HAP-1 (cell line): ENCODE measurements at regions of chr17 and their contacts with region 1.

Region 1: DNA sequence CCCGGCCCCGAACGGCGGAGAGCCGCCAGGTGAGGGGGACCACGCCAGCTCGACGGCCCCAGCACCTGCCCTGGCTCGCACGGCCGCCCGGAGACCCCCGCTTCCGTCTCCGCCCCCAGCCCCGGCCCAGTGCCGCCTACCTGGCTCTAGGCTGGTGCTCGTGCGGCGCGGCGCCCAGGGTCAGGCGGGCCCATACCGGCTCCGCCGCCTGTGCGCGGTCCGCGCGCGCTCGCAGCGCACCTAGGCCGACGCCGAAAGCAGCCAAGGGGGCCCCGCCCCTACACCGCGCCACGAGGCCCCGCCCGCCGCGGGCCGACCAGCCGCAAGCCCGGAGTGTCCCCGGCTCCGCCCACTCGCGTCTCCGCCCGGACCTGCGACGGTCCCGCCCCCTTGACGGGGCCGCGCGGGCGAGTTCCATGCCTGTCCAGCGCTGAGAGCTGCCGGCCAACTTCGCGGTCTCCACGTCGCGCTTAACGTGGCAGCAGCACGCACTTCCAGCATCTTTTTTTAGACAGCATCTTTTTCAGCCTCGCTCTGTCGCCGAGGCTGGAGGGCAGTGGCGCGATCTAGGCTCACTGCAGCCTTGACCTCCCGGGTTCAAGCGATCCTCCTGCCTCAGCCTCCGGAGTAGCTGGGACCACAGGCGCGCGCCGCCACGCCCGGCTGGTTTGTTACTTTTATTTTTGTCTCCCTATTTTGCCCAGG is at the start of gene SLC25A39:
- DNase-seq: peak; percentile 84 to 96
- H3K4me3 ChIP-seq: peak within 1 kb of the TSS; percentile 88
- H3K4me1 ChIP-seq: peaks cover 13% of the 10 kb centered on the region
- H3K27me3 ChIP-seq: no peaks in the 10 kb centered on the region

Region 2: DNA sequence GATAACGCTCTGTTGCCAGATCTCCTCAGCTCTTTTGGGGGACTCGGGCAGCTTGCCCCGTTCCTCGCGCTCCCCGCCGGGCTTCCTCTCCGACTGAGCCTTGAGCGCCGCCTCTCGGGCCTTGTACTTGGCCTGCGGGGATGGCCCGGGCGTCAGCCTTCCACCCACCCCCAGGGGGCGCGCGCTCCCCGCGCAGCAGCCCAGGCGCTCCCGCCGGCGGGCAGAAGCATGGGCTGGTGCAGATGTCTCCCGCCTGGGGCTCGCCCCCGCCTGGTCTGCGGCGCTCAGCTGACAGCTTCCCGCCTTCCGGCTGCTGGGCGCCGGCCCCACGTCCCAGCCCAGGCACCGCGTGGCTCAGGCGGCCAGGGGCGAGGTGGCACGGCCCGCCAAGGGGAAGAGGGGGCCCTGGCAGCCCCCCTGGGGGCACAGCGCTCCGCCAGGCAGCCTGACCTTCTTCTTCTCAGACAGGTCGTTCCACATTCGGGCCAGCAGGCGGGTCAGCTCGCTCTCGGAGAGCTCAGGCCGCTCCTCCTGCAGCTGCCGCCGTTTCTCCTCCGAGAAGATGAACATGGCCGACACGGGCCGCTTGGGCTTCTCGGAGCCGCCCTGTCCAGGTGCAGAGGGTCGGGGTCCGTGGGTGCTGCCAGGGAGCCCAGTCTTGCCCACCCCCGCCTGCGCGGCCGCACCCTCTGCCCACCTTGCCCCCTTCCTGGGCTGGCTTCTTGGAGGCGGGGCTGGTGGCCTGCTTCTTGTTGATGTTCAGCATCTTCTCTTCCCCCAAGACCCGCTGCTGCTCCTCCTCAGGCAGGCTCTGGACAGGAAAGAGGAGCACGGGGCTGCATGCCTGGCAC is 114.2 kb before region 1 on chr17:
- in situ Hi-C with region 1: loop called (anchors 5 kb)
- DNase-seq: peak; percentile 75 to 88
- H3K4me3 ChIP-seq: no peak overlapping the region
- H3K4me1 ChIP-seq: peaks cover 3% of the 10 kb centered on the region; the same call in 1 of the 2 replicates
- H3K27me3 ChIP-seq: no peaks in the 10 kb centered on the region

Region 3: DNA sequence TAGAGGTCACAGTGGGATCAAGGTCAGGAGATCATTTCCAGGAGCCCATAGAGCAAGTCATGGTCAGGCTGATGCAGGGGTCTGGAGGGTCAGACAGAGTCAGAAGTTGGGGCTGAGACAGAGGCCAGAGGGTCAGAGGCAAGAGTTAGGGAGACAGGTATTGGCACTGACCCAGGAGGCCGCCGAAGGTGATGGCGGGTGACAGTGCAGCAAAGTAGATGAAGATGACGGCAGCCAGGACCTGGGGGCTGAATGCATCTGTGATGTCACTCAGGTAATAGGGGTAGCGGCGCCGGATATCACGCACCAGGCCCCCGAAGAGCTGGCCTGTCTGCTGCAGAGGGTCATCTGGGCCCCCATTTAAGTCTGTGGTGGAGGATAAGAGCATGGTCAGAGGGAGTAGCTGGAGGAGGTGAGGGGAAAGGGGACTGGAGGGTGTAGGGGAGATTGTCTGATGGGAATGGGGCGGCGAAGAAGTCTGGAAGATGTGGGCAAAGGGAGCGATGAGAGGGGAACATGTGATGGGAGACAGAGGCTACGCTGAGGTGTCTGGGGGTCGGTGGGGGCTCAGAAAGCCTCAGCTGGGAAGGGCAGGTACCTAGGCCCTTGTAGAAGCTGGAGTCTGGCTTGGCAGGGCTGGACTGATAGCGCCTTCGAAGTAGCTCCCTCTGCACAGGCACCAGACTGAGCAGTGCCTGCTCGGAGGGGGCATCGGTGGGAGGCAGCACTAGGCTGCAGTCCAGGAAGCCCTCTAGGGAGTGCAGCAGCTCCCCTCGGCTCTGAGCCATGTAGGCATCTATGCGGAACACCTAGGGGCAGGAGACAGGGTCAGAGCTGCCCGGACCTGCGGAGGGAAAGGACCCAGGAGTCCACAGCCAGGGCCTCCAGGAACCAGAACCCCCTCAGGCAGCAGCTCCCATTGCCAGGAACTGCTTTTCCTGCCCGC is 66.6 kb before region 1 on chr17:
- in situ Hi-C with region 1: no loop called
- DNase-seq: no peak
- H3K4me3 ChIP-seq: no peak overlapping the region
- H3K4me1 ChIP-seq: no peaks in the 10 kb centered on the region
- H3K27me3 ChIP-seq: peaks cover 7% of the 10 kb centered on the region; the same call in 1 of the 2 replicates